Adrenal gland (tissue), 19 donors: ENCODE measurements at regions of chr1 and their contacts with region 1.

Region 1: DNA sequence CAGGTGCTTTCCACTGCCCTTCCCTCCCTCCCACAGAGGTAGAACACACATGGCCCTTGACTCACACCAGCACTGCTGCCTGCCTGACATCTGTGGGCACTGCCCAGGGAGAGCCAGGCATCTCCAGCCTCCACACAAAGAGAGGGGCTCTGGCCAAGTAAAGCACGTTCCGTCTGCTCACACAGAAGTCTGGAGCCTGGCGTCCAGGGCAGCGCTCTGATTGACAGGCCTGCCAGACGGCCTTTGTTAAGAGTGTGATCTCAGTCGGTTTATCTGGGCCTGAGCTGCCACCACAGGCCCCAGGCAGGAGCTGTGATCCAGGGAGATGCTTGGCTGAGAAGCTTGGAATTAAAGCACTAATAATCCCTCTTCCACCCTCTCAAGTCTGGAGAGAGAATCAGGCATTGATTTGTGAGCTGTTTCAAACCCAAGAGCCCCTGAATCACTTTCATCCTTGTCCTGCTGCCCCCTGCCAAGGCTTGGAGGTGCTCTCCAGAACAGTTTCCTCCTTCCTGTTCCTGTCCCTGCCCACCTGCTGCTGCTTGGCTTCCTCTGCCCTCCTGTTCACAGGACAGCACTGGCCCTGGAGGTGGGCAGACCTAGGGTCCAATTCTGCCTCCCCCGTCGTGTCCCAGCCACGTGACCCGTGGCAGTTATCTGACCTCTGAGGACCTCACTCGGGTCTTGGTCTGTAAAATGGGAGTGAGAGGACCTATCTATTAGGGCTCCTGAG is 3.7 kb downstream of the DMRTB1 start:
- DNase-seq: peak in 1 of 7 donors; percentile 42
- H3K4me3 ChIP-seq: no peak overlapping the region
- H3K27ac ChIP-seq: no peak overlapping the region
- H3K4me1 ChIP-seq: no peaks in the 10 kb centered on the region
- H3K27me3 ChIP-seq: no peaks in the 10 kb centered on the region
- CTCF ChIP-seq: no peak
- POLR2A ChIP-seq: no peak

Region 2: DNA sequence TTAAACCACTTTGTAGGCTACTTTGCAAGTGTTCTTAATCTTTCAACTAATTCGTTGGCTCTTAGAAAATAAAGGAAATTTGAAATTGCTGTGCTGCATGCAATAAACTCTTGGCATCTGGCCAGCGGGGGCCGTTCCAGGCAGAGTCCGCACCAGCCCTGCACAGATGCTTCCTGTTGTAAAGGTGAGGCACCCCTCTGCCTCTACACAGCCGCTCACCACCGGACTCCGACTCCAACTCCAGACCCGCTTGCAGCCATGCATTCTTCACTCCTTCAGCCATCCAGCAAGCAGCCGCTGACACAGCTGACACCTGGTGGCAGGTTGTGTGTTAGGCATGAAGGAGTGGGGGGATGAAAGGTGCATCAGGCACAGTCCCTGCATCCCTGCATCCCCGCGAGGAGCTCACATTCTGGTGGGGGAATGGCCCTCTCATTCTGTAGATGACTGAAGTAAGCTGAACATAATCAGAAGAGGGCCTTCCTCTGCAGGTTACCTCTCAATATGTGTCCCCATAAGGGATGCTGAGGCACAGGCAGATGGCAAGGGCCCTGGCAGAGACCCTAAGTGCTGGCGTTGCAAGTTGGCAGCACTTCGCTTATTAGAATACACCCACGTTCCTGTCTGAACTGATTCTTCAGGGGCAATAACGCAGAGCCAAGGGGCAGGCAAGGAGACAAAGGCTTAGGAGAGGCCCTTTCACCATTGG is 219.2 kb after region 1 on chr1:
- intact Hi-C with region 1: loop called in 1 of 2 experiments (anchors 10 kb)
- DNase-seq: peak in 6 of 7 donors; percentile 21 to 56 (median 26)
- H3K4me3 ChIP-seq: no peak overlapping the region
- H3K27ac ChIP-seq: no peak overlapping the region
- H3K4me1 ChIP-seq: no peaks in the 10 kb centered on the region
- H3K27me3 ChIP-seq: no peaks in the 10 kb centered on the region
- CTCF ChIP-seq: peak in 5 of 6 experiments; percentile 15 to 52 (median 34)
- POLR2A ChIP-seq: no peak